Tibial artery (tissue), 4 donors: ENCODE measurements at regions of chr1 and their contacts with region 1.

Region 1: GRCh38 chr1:228423404-228424053 is 6.9 kb upstream of the TRIM17 start:
- DNase-seq: no peak
- H3K4me3 ChIP-seq: no peak overlapping the region
- H3K27ac ChIP-seq: no peak overlapping the region
- H3K4me1 ChIP-seq: no peaks in the 10 kb centered on the region
- H3K27me3 ChIP-seq: no peaks in the 10 kb centered on the region
- CTCF ChIP-seq: no peak

Region 2: GRCh38 chr1:228345201-228345930 is 78.2 kb before region 1 on chr1:
- intact Hi-C with region 1: no loop called
- DNase-seq: peak; percentile 17 to 64
- H3K4me3 ChIP-seq: no peak overlapping the region
- H3K27ac ChIP-seq: no peak overlapping the region
- H3K4me1 ChIP-seq: no peaks in the 10 kb centered on the region
- H3K27me3 ChIP-seq: no peaks in the 10 kb centered on the region
- CTCF ChIP-seq: no peak

Region 3: DNA sequence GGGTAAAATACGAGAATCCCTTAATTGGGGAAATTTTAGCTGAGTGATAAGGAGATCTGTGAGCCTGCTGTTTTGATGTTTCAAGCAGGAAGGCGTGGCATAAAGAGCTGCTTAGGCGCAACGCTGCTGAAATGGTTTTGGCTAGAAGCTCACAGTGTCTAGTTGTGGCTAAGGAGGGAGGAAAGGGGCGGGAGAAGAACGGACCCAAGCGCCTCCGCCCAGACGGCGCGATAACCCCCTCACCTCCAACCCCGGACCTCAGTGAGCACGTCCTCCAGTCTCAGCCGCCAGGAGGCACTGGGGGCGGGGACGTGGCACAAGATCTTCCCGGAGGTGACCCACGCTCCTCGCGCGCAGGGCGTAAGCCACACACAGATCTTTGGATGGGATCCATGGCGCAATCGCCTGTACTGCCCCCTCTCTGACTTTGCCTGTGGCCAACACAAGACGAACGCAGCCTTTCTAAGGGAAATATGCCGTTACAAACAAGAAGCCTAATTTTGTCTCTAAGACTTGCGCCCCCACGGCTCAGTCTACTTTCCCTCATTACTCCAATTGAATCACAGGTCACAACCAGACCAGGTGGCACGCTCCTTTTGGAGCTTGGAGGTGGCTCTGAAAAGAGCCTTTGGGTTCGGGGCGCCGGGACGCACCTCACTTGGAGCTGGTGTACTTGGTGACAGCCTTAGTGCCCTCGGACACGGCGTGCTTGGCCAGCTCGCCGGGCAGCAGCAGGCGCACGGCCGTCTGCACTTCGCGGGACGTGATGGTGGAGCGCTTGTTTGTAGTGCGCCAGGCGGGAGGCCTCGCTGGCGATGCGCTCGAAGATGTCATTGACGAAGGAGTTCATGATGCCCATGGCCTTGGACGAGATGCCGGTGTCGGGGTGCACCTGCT is 40.3 kb after region 1 on chr1:
- intact Hi-C with region 1: loop called (anchors 2 kb)
- DNase-seq: no peak
- H3K4me3 ChIP-seq: peak overlapping the region in 1 of 2 donors; percentile 36
- H3K27ac ChIP-seq: no peak overlapping the region
- H3K4me1 ChIP-seq: peaks cover 0 to 25% (median 22%) of the 10 kb centered on the region in 4 donors
- H3K27me3 ChIP-seq: peaks cover 3 to 98% of the 10 kb centered on the region in 2 donors
- CTCF ChIP-seq: no peak